PC-3 (cell line): ENCODE measurements at regions of chr22 and their contacts with region 1.

Region 1: DNA sequence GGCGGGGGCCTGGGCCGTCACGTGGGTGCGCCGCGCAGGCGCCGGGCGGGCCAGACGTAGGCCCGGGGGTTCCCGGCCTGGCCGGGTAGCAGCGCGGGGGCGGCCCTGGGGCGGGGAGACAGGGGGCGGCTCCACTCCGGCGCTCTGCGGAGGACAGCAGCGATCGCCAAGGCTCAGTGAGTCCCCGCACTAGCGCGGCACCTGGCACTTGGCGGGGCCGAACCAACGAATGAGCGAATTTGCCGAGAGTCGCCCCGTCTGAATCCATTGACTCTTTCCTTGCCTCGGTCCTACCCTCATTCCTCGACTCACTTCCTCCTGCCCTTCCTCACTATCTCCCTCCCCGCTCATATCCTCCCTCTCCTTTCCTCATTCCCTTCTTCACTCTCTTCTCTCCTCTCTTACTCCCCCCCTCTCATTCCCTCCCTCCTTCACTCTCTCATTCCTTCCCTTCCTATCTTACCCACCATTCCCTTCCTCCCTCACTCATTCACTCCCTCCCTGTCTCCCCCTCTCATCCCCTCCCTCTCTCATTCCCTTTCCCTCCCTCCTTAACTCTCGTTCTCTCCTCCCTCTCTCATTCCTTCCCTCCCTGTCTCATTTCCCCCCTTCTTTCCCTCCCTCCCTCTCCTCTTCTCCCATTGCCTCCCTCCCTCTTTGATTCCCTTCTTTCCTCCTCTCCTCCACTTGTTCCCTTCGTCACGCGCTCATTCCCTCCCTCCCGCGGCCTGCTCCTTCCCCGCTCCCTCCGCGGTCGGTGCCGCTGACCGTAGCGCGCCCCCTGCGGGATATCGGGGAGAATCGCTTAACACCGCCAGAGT is 476 bp upstream of the KLHL22 start:
- DNase-seq: peak; percentile 79
- ATAC-seq: peak; percentile 83
- H3K4me3 ChIP-seq: peak overlapping the region; percentile 74
- H3K27ac ChIP-seq: peak overlapping the region; percentile 80
- H3K4me1 ChIP-seq: peaks cover 25% of the 10 kb centered on the region
- H3K27me3 ChIP-seq: no peaks in the 10 kb centered on the region
- CTCF ChIP-seq: peak; percentile 84

Region 2: GRCh38 chr22:20378110-20378509 is 118.0 kb before region 1 on chr22:
- CTCF ChIA-PET with region 1: no interaction called
- POLR2A ChIA-PET with region 1: interaction called, 19 read pairs
- intact Hi-C with region 1: no loop called
- DNase-seq: no peak
- ATAC-seq: no peak
- H3K4me3 ChIP-seq: no peak overlapping the region
- H3K27ac ChIP-seq: no peak overlapping the region
- H3K4me1 ChIP-seq: no peaks in the 10 kb centered on the region
- H3K27me3 ChIP-seq: no peaks in the 10 kb centered on the region
- CTCF ChIP-seq: no peak